ENCODE measurements at regions of chr3 and their contacts with region 1.

Region 1: DNA sequence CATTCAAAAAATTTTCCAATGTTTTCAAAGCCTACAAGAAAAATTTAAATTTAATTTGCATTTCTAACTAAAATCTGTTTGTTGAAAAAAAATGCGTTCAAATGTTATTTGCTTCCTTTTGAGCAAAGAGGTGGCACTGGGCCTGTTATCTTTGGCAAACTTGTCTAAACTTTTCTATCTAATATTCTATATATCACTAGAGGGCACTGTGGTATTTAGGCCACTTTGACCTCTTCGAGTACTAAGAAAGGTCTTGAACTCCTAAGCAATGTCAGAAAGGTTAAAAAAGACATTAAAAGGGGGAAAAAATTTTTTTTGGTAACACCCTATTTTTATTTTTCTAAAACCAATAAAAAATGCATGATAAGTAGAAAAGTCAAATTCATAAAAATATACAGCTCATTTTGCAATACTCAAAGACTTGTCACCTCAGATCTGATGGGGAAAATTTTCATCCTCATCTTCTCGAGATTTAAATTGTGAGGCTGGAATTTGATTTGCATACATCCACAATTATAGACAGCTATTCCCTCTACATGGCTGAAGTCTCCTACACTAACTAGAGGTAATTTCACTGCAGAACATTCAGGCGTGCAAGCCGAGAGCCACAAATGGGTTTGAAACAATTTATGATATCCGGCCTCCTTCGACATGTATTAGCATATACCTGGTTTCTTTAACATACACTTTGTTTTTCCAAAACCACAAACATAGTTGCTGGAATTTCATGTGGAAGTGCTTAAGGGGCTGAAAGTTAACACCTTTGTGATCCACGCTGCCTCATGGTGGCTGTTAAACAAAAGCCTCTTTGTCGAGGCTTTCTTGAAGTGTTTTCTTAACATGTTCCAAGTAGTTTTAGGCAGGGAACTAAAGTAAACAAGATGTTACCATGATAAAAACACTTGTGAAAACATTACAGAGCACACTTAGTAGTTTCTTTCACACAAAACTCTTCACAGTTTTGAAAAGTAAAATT is 576.4 kb downstream of the FOXP1 start:
- DNase-seq: no peak
- ATAC-seq: peak; percentile 82 to 86
- H3K4me3 ChIP-seq: no peak overlapping the region
- H3K27ac ChIP-seq: peak overlapping the region; percentile 44
- H3K4me1 ChIP-seq: peaks cover 46% of the 10 kb centered on the region
- H3K27me3 ChIP-seq: no peaks in the 10 kb centered on the region
- CTCF ChIP-seq: peak; percentile 53

Region 2: DNA sequence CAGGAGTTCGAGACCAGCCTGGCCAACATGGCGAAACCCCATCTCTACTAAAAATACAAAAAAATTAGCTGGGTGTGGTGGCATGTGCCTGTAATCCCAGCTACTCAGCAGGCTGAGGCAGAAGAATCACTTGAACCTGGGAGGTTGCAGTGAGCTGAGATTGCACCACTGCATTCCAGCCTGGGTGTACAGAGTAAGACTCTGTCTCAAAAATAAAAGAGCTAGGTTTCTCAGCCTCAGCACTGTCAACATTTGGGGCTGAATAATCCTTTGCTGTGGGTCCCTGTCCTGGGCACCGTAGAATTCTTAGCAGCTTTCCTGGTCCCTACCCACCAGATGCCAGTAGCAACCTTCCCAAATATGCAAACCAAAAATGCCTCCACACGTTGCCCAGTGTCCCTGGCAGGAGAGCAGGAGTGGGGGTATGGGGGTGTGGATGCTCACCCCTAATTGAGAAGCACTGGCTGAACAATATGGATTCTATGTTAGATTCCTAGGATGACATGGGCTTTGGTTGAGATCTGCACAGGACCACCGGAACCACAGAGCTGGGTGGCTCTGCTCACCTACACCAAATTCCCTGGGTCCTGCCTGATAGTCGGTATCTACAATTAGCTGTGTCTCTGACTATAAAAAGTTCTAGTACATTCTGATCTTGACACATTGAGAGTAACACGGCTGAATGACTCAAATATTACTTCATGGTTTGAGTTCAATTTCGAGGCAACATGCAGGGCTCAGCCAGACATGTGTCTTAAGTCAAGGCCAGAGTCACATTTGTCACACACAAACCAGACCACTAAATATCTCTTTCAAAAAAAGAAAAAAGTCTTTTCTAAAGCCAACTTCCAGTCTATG is 117.7 kb before region 1 on chr3:
- intact Hi-C with region 1: no loop called
- DNase-seq: no peak
- ATAC-seq: peak in 1 of 2 donors; percentile 47
- H3K4me3 ChIP-seq: no peak overlapping the region
- H3K27ac ChIP-seq: peak overlapping the region; percentile 31
- H3K4me1 ChIP-seq: no peaks in the 10 kb centered on the region
- H3K27me3 ChIP-seq: no peaks in the 10 kb centered on the region
- CTCF ChIP-seq: no peak

Region 3: GRCh38 chr3:71069797-71070196 is 62.7 kb after region 1 on chr3:
- intact Hi-C with region 1: loop called (anchors 5 kb)
- DNase-seq: peak; percentile 63
- ATAC-seq: peak; percentile 46 to 67
- H3K4me3 ChIP-seq: no peak overlapping the region
- H3K27ac ChIP-seq: no peak overlapping the region
- H3K4me1 ChIP-seq: peaks cover 52% of the 10 kb centered on the region
- H3K27me3 ChIP-seq: no peaks in the 10 kb centered on the region
- CTCF ChIP-seq: peak; percentile 65

Measured in lower lobe of right lung (tissue), 2 donors.